ENCODE measurements at regions of chrX and their contacts with region 1.

Region 1: DNA sequence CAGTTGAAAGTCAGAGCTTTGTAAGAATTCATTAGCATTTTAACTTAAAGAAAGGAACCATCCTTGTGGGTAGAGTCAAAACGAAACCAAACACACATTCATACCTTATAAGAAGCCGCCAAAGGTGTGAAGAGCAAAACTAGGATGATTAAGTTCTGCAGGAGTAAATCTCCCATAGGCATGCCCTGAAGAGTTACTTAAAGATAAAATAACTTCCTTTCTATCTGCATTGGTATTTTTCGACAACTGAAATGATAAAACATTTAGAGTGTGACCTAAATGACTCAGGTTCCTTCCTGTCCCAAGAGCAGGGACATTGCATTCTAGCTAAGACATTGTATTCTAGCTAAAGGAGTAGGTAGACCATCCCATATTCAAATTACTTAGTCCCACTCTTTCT is 75.3 kb downstream of the BCOR start:
- DNase-seq: peak; percentile 66
- H3K4me3 Mint-ChIP-seq: no peak overlapping the region
- H3K27ac Mint-ChIP-seq: no peak overlapping the region
- H3K4me1 Mint-ChIP-seq: peaks cover 22% of the 10 kb centered on the region
- H3K27me3 Mint-ChIP-seq: peaks cover 1% of the 10 kb centered on the region

Region 2: DNA sequence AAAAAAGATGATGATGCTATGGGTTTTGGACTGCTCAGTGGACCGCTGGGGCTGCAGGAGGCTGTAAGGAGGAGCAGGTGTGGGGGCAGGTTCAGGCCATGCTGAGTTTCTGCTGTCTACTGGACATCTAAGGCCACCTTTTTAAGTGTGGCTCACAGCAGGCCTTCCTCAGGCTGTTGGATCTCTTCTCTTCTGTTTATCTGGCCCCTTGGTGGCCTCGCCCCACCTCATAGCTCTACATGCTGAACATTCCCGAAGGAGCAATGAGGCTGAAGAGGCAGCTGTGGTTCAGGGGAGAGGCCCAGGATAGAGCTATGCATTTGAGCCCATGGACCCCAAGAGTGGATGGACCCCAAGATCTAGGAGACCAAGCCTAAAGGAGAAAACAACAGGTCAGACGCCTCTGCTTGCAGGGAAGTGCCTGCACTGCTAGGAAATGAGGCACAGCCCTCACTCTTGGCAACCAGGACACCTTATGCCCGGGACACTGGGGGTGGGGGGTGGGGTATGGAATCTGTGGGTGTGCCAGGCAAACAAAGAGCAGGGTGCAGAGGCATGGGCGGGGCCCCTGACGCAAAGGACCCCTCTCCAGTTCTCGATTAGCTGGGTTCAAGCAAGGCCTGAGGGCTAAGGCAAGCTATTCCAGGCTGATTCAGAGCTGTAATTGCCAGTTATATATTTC is 93.6 kb before region 1 on chrX:
- intact Hi-C with region 1: no loop called
- DNase-seq: no peak
- H3K4me3 Mint-ChIP-seq: no peak overlapping the region
- H3K27ac Mint-ChIP-seq: no peak overlapping the region
- H3K4me1 Mint-ChIP-seq: peaks cover 3% of the 10 kb centered on the region
- H3K27me3 Mint-ChIP-seq: no peaks in the 10 kb centered on the region

Region 3: GRCh38 chrX:40006106-40007017 is 16.1 kb before region 1 on chrX:
- intact Hi-C with region 1: loop called (anchors 2 kb)
- DNase-seq: peak; percentile 77
- H3K4me3 Mint-ChIP-seq: peak overlapping the region; percentile 62
- H3K27ac Mint-ChIP-seq: no peak overlapping the region
- H3K4me1 Mint-ChIP-seq: peaks cover 26% of the 10 kb centered on the region
- H3K27me3 Mint-ChIP-seq: peaks cover 29% of the 10 kb centered on the region

Region 4: GRCh38 chrX:40140706-40141499 is 118.5 kb after region 1 on chrX:
- intact Hi-C with region 1: no loop called
- DNase-seq: no peak
- H3K4me3 Mint-ChIP-seq: no peak overlapping the region
- H3K27ac Mint-ChIP-seq: no peak overlapping the region
- H3K4me1 Mint-ChIP-seq: no peaks in the 10 kb centered on the region
- H3K27me3 Mint-ChIP-seq: no peaks in the 10 kb centered on the region